Activated B cell treated with CpG ODN at 0.5 μM for 24 hours (primary cell): ENCODE measurements at regions of chr17 and their contacts with region 1.

Region 1: DNA sequence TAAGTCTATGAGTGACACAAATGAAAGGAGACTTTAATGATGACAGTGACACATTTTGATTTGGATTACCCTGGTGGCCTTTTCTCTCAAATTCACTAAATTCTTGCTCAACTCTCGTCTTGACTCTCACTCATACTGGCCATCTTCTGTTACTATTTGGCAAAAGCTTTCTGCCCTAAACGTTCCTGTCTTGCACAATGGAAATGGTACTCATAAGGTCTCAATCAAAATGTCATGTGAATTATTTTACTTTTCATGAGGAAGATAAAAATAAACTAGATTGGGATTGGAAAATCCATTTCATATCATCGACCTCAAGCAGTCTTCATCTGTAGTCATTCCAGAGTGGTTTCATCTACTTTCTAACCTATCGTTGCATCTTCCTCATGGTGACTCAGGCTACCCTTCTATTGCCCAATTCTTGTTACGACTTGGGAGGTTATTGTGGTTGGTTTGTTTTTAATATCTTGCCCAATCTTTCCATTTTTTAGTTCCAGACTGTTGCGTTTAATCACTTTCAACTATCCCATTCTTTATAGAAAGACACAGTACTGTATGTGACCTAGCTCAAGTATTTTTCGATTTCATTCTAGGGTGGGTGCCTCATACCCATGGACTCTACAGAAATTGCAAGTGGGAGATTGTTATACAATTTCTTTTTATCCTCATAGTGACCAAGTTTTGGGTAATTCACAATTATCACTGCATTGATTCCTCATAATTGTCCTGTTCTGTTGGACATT is 317.2 kb upstream of the KCNJ16 start:
- DNase-seq: no peak
- ATAC-seq: no peak
- H3K4me3 Mint-ChIP-seq: no peak overlapping the region
- H3K27ac Mint-ChIP-seq: no peak overlapping the region
- H3K4me1 Mint-ChIP-seq: no peaks in the 10 kb centered on the region
- H3K27me3 Mint-ChIP-seq: no peaks in the 10 kb centered on the region
- CTCF ChIP-seq: no peak

Region 2: GRCh38 chr17:69743091-69743490 is 14.8 kb before region 1 on chr17:
- CTCF ChIA-PET with region 1: no interaction called
- POLR2A ChIA-PET with region 1: no interaction called
- intact Hi-C with region 1: no loop called
- DNase-seq: no peak
- ATAC-seq: no peak
- H3K4me3 Mint-ChIP-seq: no peak overlapping the region
- H3K27ac Mint-ChIP-seq: no peak overlapping the region
- H3K4me1 Mint-ChIP-seq: no peaks in the 10 kb centered on the region
- H3K27me3 Mint-ChIP-seq: no peaks in the 10 kb centered on the region
- CTCF ChIP-seq: no peak

Region 3: DNA sequence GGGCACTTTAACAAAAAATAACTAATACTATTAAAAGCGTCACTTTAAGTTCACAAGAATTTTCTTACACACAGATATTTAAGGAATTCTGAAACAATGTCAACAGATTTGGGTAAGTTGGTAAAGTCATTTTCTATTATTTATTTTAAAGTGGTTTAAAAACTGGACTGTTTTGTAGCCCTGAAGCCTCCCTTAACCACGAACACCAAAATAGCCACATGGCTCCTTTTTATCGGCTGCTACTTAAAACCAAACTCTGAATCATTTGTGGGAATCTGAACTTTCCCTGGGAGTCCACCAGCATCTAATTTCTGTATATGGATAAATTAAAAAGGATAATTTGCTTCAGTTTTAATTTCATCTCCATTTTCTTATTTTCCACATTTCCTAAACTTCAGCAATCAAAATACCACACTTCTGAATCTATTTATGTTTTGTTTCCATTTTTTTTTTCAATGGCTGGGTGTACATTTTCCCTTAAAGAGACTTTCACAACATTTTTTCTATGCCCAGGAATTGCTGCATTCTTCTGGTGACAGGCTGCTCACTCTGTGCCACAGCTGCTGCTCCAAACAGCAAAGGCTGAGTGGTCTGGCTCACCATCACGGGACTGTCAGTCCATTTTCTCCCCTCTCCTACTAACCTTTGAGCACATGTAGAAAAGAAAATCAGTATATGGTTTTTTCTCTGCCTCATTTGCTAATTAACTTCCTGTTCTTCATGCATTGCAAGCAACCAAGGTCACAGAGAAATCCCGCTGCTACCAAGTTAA is 61.6 kb after region 1 on chr17:
- CTCF ChIA-PET with region 1: no interaction called
- POLR2A ChIA-PET with region 1: no interaction called
- intact Hi-C with region 1: no loop called
- DNase-seq: no peak
- ATAC-seq: no peak
- H3K4me3 Mint-ChIP-seq: no peak overlapping the region
- H3K27ac Mint-ChIP-seq: no peak overlapping the region
- H3K4me1 Mint-ChIP-seq: no peaks in the 10 kb centered on the region
- H3K27me3 Mint-ChIP-seq: no peaks in the 10 kb centered on the region
- CTCF ChIP-seq: no peak

Region 4: DNA sequence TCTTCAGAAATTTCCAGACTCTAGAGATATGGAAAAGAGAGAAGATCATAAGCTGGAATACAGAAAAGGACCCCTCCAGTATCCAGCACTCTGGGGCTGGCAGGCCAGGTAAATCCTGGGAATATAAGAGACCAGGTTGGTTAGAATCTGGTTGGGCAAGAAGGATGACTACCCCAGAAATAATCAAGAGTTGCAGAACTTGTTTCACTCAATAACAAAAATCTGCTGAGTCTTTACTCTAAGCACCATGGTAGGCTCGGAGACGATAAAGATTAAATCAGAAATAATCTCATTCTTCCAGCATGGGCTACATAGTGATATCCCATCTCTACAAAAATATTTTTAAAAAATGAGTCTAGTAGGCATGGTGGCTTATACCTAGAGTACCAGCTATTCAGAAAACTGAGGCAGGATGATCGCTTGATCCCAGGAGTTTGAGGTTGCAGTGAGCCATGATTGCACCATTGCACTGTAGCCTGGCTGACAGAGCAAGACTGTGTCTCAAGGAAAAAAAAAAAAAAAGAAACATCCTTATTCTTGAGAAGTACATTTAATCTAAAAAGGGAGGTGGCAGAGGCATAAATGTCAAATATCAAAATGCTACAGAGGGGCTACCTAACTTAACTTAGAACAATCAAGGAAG is 179.2 kb after region 1 on chr17:
- CTCF ChIA-PET with region 1: no interaction called
- POLR2A ChIA-PET with region 1: no interaction called
- intact Hi-C with region 1: no loop called
- DNase-seq: no peak
- ATAC-seq: no peak
- H3K4me3 Mint-ChIP-seq: no peak overlapping the region
- H3K27ac Mint-ChIP-seq: no peak overlapping the region
- H3K4me1 Mint-ChIP-seq: no peaks in the 10 kb centered on the region
- H3K27me3 Mint-ChIP-seq: no peaks in the 10 kb centered on the region
- CTCF ChIP-seq: no peak

Region 5: DNA sequence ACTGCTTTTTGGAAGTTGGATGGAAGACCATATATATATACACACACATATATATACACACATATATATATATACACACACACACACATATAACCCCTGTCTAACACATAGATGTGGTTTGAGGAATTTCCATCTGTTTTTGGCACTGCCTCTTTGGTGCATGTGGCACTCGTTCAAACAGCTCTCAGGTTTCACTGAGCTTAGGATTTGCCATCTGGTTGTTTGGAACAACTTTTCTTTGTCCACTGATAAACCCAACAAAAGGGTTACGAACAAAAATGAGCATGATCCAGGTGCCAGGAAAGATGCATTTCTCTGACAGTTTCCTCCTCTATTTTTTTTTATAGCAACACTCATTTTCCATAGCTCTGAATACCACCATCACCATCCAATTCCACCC is 302.6 kb after region 1 on chr17:
- CTCF ChIA-PET with region 1: no interaction called
- POLR2A ChIA-PET with region 1: interaction called, 13 read pairs
- intact Hi-C with region 1: no loop called
- DNase-seq: no peak
- ATAC-seq: no peak
- H3K4me3 Mint-ChIP-seq: no peak overlapping the region
- H3K27ac Mint-ChIP-seq: no peak overlapping the region
- H3K4me1 Mint-ChIP-seq: no peaks in the 10 kb centered on the region
- H3K27me3 Mint-ChIP-seq: no peaks in the 10 kb centered on the region
- CTCF ChIP-seq: no peak